GM12878 (cell line): ENCODE measurements at regions of chr7 and their contacts with region 1.

Region 1: GRCh38 chr7:30322271-30323005 is 38.0 kb downstream of the ZNRF2 start:
- DNase-seq: peak; percentile 74
- ATAC-seq: peak; percentile 90
- H3K4me3 ChIP-seq: peak overlapping the region; percentile 57
- H3K27ac ChIP-seq: peak overlapping the region; percentile 87
- H3K4me1 ChIP-seq: peaks cover 18% of the 10 kb centered on the region
- H3K27me3 ChIP-seq: no peaks in the 10 kb centered on the region
- CTCF ChIP-seq: no peak
- EP300 ChIP-seq: no peak
- POLR2A ChIP-seq: peak; percentile 26; the same call in 1 of the 2 replicates
- RAD21 ChIP-seq: no peak

Region 2: DNA sequence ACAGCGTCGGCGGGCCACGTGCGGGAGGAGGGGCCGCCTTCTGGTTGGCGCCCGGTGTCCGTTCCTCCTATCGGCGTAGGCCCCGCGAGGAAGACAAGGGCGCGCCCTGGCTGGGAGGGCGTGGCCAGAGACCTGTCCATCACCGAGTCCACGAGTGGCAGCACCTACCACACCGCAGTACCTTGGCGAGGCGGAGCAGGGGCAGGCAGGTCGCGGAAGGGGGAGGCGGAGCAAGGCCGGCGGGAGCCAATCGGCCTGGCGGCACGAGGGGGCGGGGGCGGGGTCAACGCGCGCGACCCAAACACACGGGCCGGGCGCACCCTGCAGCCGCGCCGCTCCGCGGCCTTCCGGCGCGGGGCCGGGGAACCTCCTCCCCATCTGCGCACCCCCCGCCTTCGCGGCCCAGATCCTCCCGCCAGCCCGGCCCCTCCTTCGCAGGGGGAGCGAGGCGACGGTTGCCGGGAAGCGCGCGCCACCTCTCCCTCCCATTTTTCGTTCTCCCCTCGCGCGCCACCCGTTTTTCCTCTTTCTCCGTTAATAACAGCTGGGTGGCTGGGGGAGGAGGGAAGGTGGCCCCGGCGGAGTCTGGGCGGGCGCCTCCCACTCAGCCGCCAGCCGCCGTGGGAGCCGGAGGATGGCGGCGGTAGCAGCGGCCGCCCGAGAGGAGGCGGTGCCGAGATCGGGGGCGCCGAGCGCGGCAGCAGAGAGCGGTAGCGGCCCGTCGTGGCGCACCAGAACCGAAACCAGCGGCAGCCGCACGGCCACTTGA is 38.0 kb before region 1 on chr7 and contains the start of gene ZNRF2:
- CTCF ChIA-PET with region 1: interaction called, 7 read pairs
- POLR2A ChIA-PET with region 1: interaction called, 3 read pairs
- RAD21 ChIA-PET with region 1: interaction called, 14 read pairs
- SMC1A ChIA-PET with region 1: interaction called, 50 read pairs
- in situ Hi-C with region 1: no loop called
- intact Hi-C with region 1: loop called (anchors 2 kb)
- DNase-seq: peak; percentile 97
- ATAC-seq: peak; percentile 91
- H3K4me3 ChIP-seq: peak within 1 kb of the TSS; percentile 61; the same call in 1 of the 2 replicates
- H3K27ac ChIP-seq: peak within 1 kb of the TSS; percentile 83
- H3K4me1 ChIP-seq: peaks cover 12% of the 10 kb centered on the region
- H3K27me3 ChIP-seq: no peaks in the 10 kb centered on the region
- CTCF ChIP-seq: peak; percentile 21 to 63 (median 39); a peak in 4 of 6 replicates
- EP300 ChIP-seq: no peak
- POLR2A ChIP-seq: peak; percentile 84
- RAD21 ChIP-seq: peak; percentile 33; the same call in 1 of the 2 replicates
- polyA plus RNA-seq, gene ZNRF2: 3.1 to 4.0 TPM

Region 3: DNA sequence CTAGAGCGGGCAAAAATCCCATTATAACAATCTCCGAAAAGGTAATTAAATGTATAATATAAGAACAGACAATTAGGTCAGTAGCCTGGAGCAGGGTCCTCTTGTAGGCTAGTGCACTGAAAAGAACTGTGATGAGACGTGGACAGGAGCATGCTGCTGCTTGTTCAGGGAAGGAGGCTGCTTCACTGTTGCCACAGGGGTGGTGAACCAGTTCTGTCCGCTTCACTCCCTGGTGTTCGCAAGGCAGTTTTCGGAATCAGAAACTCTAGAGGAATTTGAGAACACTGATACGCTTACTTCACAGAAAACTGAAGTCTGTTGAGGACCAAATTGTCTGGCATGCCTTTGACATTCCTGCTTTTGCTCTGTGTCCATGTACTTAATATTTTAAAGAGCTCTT is 20.7 kb before region 1 on chr7:
- CTCF ChIA-PET with region 1: interaction called, 15 read pairs
- POLR2A ChIA-PET with region 1: interaction called, 5 read pairs
- RAD21 ChIA-PET with region 1: interaction called, 12 read pairs
- SMC1A ChIA-PET with region 1: interaction called, 23 read pairs
- in situ Hi-C with region 1: no loop called
- intact Hi-C with region 1: no loop called
- DNase-seq: no peak
- ATAC-seq: no peak
- H3K4me3 ChIP-seq: no peak overlapping the region
- H3K27ac ChIP-seq: no peak overlapping the region
- H3K4me1 ChIP-seq: peaks cover 22% of the 10 kb centered on the region
- H3K27me3 ChIP-seq: no peaks in the 10 kb centered on the region
- CTCF ChIP-seq: no peak
- EP300 ChIP-seq: no peak
- POLR2A ChIP-seq: no peak
- RAD21 ChIP-seq: no peak

Region 4: GRCh38 chr7:30308389-30308788 is 14.0 kb before region 1 on chr7:
- CTCF ChIA-PET with region 1: interaction called, 15 read pairs
- POLR2A ChIA-PET with region 1: interaction called, 9 read pairs
- RAD21 ChIA-PET with region 1: interaction called, 12 read pairs
- SMC1A ChIA-PET with region 1: interaction called, 30 read pairs
- in situ Hi-C with region 1: no loop called
- intact Hi-C with region 1: no loop called
- DNase-seq: no peak
- ATAC-seq: peak; percentile 46
- H3K4me3 ChIP-seq: no peak overlapping the region
- H3K27ac ChIP-seq: peak overlapping the region; percentile 2; the same call in 1 of the 2 replicates
- H3K4me1 ChIP-seq: peaks cover 44% of the 10 kb centered on the region
- H3K27me3 ChIP-seq: no peaks in the 10 kb centered on the region
- CTCF ChIP-seq: no peak
- EP300 ChIP-seq: no peak
- POLR2A ChIP-seq: no peak
- RAD21 ChIP-seq: no peak

Region 5: DNA sequence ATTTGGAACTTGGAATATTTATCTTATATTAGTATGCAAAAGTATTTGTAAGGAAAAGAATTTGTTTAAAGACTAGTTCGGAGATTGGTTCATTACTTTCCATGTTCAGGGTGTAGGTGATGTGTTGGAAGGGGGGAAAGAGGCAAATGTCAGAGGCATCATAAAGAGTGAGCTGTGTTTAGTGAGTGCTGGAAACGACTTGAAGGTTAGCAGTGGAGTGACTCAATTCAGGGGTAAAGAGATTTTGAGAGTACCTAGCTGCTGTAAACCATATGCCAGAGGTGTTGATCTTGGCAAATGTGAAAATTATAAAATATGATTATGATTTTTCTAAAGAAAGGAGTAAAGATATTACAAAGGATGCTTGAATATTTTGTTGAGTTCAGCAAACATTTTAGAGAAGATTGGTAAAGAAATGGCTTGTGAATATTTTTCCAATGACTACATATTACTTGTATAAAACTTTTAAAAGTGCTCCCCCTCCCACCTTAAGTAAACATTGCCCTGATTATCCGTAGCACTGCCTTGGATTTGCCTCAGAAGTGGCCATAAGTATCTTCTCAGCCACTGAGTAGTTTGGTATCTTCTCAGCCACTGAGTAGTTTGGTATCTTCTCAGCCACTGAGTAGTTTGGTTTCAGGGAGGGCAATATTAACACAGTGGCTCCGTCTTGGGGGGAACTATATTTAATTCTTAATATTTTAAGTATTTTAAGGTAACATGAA is 13.5 kb after region 1 on chr7:
- CTCF ChIA-PET with region 1: interaction called, 7 read pairs
- POLR2A ChIA-PET with region 1: interaction called, 19 read pairs
- RAD21 ChIA-PET with region 1: interaction called, 26 read pairs
- SMC1A ChIA-PET with region 1: interaction called, 61 read pairs
- in situ Hi-C with region 1: no loop called
- intact Hi-C with region 1: no loop called
- DNase-seq: no peak
- ATAC-seq: no peak
- H3K4me3 ChIP-seq: no peak overlapping the region
- H3K27ac ChIP-seq: no peak overlapping the region
- H3K4me1 ChIP-seq: peaks cover 8% of the 10 kb centered on the region; the same call in 1 of the 2 replicates
- H3K27me3 ChIP-seq: no peaks in the 10 kb centered on the region
- CTCF ChIP-seq: no peak
- EP300 ChIP-seq: no peak
- POLR2A ChIP-seq: no peak
- RAD21 ChIP-seq: no peak

Region 6: DNA sequence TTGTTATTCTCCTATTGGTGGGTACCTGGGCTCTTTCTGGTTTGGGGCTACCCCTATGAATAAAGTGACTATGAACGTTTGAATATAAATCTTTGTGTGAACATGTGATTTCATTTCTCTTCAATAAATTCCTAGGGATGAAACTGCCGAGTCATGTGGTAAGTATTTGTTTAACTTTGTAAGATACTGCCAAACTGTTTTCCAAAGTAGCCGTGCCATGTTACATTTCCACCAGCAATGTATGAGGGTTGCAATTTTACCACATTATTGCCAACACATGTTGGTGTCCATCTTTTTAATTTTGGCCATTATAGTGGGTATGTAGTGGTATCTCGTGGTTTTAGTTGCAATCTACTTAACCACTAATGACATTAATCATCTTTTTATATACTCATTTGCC is 56.7 kb after region 1 on chr7:
- CTCF ChIA-PET with region 1: no interaction called
- POLR2A ChIA-PET with region 1: no interaction called
- RAD21 ChIA-PET with region 1: no interaction called
- SMC1A ChIA-PET with region 1: no interaction called
- in situ Hi-C with region 1: no loop called
- intact Hi-C with region 1: no loop called
- DNase-seq: no peak
- ATAC-seq: no peak
- H3K4me3 ChIP-seq: no peak overlapping the region
- H3K27ac ChIP-seq: no peak overlapping the region
- H3K4me1 ChIP-seq: no peaks in the 10 kb centered on the region
- H3K27me3 ChIP-seq: no peaks in the 10 kb centered on the region
- CTCF ChIP-seq: no peak
- EP300 ChIP-seq: no peak
- POLR2A ChIP-seq: no peak
- RAD21 ChIP-seq: no peak

Region 7: GRCh38 chr7:30445770-30446169 is 123.3 kb after region 1 on chr7:
- CTCF ChIA-PET with region 1: no interaction called
- POLR2A ChIA-PET with region 1: no interaction called
- RAD21 ChIA-PET with region 1: no interaction called
- SMC1A ChIA-PET with region 1: interaction called, 7 read pairs
- in situ Hi-C with region 1: no loop called
- intact Hi-C with region 1: loop called (anchors 5 kb)
- DNase-seq: peak; percentile 82
- ATAC-seq: peak; percentile 99
- H3K4me3 ChIP-seq: no peak overlapping the region
- H3K27ac ChIP-seq: no peak overlapping the region
- H3K4me1 ChIP-seq: peaks cover 4% of the 10 kb centered on the region
- H3K27me3 ChIP-seq: no peaks in the 10 kb centered on the region
- CTCF ChIP-seq: peak; percentile 68 to 71 (median 70)
- EP300 ChIP-seq: peak in 1 of 2 experiments; percentile 60; a peak in 2 of 4 replicates
- POLR2A ChIP-seq: no peak
- RAD21 ChIP-seq: peak; percentile 81